ENCODE measurements at regions of chr2 and their contacts with region 1.

Region 1: DNA sequence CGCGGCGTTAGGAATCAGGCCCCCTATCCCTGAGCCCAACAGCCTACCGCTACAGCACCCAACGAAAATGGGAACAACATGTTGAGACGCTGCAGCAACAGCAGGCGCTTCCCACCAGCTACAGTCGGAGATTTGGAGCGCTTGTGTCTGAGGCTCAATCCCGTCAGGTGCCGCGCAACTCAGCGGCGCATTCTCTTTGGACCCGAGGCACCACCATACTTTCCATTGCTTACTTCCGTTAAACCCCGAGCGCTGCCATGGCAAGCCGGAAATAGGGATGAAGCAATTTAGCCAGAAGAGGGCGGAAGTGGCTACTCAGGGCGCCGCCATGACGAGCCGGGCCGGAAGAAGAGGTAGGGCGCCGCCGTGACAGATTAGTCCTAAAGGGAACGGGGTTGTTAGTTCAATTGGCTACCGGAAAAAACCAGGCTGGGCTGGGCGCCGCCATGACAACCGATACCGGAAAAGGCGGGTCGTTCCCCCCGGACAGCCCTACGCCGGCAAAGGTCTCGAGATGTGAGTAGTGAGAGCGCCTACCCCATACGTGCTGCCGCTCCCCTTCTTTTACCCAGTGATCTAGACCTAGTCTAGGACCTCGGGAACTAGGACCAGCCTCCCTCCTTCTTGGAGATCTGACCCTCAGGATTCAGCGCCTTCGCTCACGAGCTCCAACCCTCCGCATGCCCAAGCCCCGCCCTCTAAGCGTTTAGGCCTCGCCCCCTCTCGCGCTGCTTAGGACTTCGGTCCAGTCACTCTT is at the start of gene CHCHD5:
- DNase-seq: peak; percentile 98
- H3K4me3 ChIP-seq: peak within 1 kb of the TSS; percentile 59
- H3K27ac ChIP-seq: peak within 1 kb of the TSS; percentile 94
- H3K4me1 ChIP-seq: peaks cover 18% of the 10 kb centered on the region
- H3K27me3 ChIP-seq: no peaks in the 10 kb centered on the region
- CTCF ChIP-seq: peak; percentile 38
- total RNA-seq, gene CHCHD5: 37.1 and 41.4 TPM in 2 replicates

Region 2: DNA sequence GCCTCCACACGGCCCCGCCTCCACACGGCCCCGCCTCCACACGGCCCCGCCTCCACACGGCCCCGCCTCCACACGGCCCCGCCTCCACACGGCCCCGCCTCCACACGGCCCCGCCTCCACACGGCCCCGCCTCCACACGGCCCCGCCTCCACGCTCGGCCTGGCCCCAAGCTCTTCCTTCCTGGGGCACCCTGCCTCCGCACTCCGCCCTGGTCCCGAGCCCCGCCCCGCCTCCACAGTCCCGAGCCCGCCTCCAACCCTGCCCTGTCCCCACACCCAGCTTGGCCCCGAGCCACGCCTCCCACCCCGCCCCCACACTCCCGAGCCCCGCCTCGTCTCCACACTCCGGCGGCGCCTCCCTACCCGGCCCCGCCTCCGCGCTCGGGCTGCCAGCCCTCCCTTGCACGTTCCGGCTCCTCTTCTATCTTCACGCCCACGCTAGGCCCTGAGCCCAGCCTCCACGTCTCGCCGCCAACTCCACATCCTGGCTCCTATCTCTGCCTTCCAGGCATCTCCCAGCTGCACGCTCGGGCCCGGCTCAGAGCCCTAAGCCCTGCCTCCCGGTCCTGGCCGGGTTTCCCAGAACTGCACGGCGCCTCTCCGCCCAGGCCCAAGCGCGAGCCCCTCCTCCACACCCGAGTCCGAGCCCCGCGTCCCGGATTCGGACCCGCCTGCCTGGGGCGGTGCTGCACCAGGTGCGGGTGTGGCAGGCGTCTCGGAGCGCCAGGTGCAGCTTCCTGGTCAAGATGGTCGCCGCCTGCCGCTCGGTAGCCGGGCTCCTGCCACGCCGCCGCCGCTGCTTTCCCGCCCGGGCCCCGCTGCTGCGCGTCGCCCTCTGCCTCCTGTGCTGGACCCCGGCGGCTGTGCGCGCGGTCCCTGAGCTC is 529.2 kb before region 1 on chr2 and contains the start of gene TMEM87B:
- CTCF ChIA-PET with region 1: no interaction called
- POLR2A ChIA-PET with region 1: no interaction called
- intact Hi-C with region 1: loop called (anchors 5 kb)
- DNase-seq: peak; percentile 97
- H3K4me3 ChIP-seq: peak within 1 kb of the TSS; percentile 99
- H3K27ac ChIP-seq: peak within 1 kb of the TSS; percentile 95
- H3K4me1 ChIP-seq: peaks cover 21% of the 10 kb centered on the region
- H3K27me3 ChIP-seq: no peaks in the 10 kb centered on the region
- CTCF ChIP-seq: no peak
- total RNA-seq, gene TMEM87B: 16.9 and 21.8 TPM in 2 replicates

Region 3: DNA sequence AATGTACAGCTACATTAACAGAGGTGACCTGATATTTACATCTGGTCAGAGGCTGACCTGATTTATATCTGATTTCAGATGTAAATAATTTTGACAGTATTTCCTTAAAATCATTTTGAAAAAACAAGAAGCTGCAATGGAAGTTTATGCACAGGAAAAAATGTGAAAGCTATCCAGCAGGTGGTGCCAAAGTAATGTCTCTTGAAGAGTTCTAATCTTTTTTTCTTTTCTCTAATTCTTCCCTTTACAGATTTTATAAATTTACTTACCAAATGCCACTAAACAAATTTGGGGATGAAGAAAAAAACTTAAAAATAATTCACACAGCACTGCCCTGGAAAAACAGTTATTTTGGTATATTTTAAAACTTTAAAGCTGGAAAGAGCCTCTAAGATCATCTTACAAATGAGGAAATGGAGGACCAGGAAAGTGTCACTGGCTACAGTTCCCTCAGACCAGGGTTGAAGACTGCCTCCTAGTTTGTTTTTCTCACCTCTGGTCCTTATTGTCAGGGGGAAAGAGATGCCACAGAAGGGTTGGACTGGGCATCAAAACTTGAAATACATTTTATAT is 462.5 kb before region 1 on chr2:
- CTCF ChIA-PET with region 1: no interaction called
- POLR2A ChIA-PET with region 1: no interaction called
- intact Hi-C with region 1: loop called (anchors 5 kb)
- DNase-seq: peak; percentile 66
- H3K4me3 ChIP-seq: no peak overlapping the region
- H3K27ac ChIP-seq: no peak overlapping the region
- H3K4me1 ChIP-seq: no peaks in the 10 kb centered on the region
- H3K27me3 ChIP-seq: no peaks in the 10 kb centered on the region
- CTCF ChIP-seq: peak; percentile 81

Region 4: DNA sequence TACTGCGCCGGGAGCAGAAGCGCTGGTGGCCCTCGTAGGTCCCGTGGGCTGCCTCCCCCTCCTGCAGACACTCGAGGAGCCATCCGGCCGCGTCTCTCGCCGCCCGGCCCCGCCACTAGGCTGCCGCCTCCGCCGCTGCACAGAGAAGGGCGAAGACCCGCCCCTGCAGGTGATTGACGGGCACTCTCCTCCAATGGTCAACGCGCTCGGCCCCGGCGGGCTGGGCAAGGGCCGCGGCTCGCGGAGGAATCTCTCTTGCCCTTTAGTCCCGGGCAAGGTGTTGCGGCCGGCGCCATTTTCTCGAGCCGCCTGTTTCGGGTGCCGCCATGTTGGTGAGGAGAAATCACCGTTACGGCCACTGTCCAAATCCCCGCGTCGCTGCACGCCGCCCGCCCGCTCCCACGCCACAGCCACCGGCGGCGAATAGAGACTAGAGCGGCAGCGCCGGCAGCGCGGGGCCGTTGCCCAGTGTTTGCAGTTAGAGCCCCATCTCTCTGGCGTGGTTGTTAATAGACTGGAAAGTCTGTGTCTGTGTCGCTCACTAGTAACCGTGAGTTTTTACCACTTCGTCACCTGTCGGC is 308.9 kb before region 1 on chr2 and contains the start of gene ZC3H6:
- CTCF ChIA-PET with region 1: interaction called, 5 read pairs
- POLR2A ChIA-PET with region 1: no interaction called
- intact Hi-C with region 1: loop called (anchors 5 kb)
- DNase-seq: peak; percentile 99
- H3K4me3 ChIP-seq: peak within 1 kb of the TSS; percentile 99
- H3K27ac ChIP-seq: peak within 1 kb of the TSS; percentile 99
- H3K4me1 ChIP-seq: peaks cover 16% of the 10 kb centered on the region
- H3K27me3 ChIP-seq: no peaks in the 10 kb centered on the region
- CTCF ChIP-seq: no peak
- total RNA-seq, gene ZC3H6: 7.6 and 14.0 TPM in 2 replicates

Region 5: GRCh38 chr2:112542123-112542983 is 42.0 kb before region 1 on chr2 and contains the start of gene POLR1B:
- CTCF ChIA-PET with region 1: no interaction called
- POLR2A ChIA-PET with region 1: no interaction called
- intact Hi-C with region 1: loop called (anchors 5 kb)
- DNase-seq: peak; percentile 88
- H3K4me3 ChIP-seq: peak within 1 kb of the TSS; percentile 78
- H3K27ac ChIP-seq: peak within 1 kb of the TSS; percentile 92
- H3K4me1 ChIP-seq: peaks cover 14% of the 10 kb centered on the region
- H3K27me3 ChIP-seq: no peaks in the 10 kb centered on the region
- CTCF ChIP-seq: no peak
- total RNA-seq, gene POLR1B: 53.9 and 70.0 TPM in 2 replicates